ENCODE measurements at regions of chr10 and their contacts with region 1.

Region 1: DNA sequence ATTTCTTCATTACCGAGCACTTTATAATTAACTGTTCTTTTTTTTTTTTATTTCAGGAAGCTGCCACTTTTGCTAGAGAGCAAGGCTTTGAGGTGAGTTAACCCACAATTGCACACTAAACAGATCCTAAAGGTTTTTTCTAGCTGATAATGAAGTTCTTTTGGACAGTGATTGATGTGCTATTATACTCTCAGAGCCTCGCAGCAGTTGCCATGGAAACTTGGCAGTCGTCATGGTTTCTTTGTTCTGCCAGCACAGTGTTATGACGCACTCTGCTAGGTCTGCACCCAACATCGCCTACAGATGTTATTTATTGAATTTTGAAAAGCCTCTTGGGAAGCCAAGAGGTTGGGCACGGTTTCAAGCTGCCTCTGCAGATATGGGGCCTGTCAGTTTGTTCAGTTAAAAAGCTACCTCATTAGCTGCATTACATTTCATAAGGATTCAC is 237.2 kb upstream of the KAT6B start:
- DNase-seq: peak; percentile 89 to 98 (median 95)
- H3K4me3 ChIP-seq: no peak overlapping the region
- H3K4me3 Mint-ChIP-seq: peak overlapping the region in 7 of 8 donors; percentile 19 to 84 (median 63)
- H3K27ac ChIP-seq: peak overlapping the region; percentile 64
- H3K27ac Mint-ChIP-seq: peak overlapping the region; percentile 88 to 97 (median 95)
- H3K4me1 ChIP-seq: peaks cover 63% of the 10 kb centered on the region
- H3K4me1 Mint-ChIP-seq: peaks cover 44 to 62% (median 53%) of the 10 kb centered on the region in 4 donors
- H3K27me3 ChIP-seq: no peaks in the 10 kb centered on the region
- H3K27me3 Mint-ChIP-seq: no peaks in the 10 kb centered on the region

Region 2: DNA sequence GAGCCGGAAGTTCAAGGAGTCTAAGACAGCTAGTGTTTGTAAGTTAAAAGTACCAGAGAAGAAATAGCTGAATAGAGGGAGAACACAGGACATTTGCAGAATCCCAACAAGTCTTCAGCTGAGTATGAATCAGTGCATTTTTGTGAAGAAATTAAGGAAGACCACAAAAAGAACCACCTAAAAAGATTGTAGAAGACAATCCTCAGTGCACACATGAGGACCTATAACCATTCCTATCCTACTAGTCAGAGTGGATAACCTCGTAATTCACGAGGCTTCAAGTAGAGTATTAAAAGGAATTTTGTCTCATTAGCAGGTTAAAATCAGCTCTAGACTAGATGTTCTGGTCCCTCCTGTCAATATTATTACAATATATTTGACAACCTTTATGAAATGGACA is 58.3 kb before region 1 on chr10:
- CTCF ChIA-PET with region 1: no interaction called
- POLR2A ChIA-PET with region 1: interaction called, 3 read pairs
- intact Hi-C with region 1: loop called (anchors 10 kb)
- DNase-seq: no peak
- H3K4me3 ChIP-seq: no peak overlapping the region
- H3K4me3 Mint-ChIP-seq: no peak overlapping the region
- H3K27ac ChIP-seq: no peak overlapping the region
- H3K27ac Mint-ChIP-seq: no peak overlapping the region
- H3K4me1 ChIP-seq: no peaks in the 10 kb centered on the region
- H3K4me1 Mint-ChIP-seq: peaks cover 0 to 2% (median under 1%) of the 10 kb centered on the region in 4 donors
- H3K27me3 ChIP-seq: no peaks in the 10 kb centered on the region
- H3K27me3 Mint-ChIP-seq: no peaks in the 10 kb centered on the region

Region 3: GRCh38 chr10:74738985-74739567 is 149.8 kb after region 1 on chr10:
- CTCF ChIA-PET with region 1: no interaction called
- POLR2A ChIA-PET with region 1: interaction called, 3 read pairs
- intact Hi-C with region 1: loop called (anchors 10 kb)
- DNase-seq: peak in 4 of 5 donors; percentile 23 to 36 (median 32)
- H3K4me3 ChIP-seq: no peak overlapping the region
- H3K4me3 Mint-ChIP-seq: peak overlapping the region in 6 of 8 donors; percentile 28 to 65 (median 49)
- H3K27ac ChIP-seq: no peak overlapping the region
- H3K27ac Mint-ChIP-seq: peak overlapping the region; percentile 63 to 89 (median 81)
- H3K4me1 ChIP-seq: peaks cover 14% of the 10 kb centered on the region
- H3K4me1 Mint-ChIP-seq: peaks cover 11 to 20% (median 17%) of the 10 kb centered on the region in 4 donors
- H3K27me3 ChIP-seq: no peaks in the 10 kb centered on the region
- H3K27me3 Mint-ChIP-seq: no peaks in the 10 kb centered on the region

Measured in CD4-positive, alpha-beta memory T cell (primary cell).